PC-3 (cell line): ENCODE measurements at regions of chr13 and their contacts with region 1.

Region 1: GRCh38 chr13:79749984-79750551 is 269.1 kb downstream of the NDFIP2 start:
- DNase-seq: peak; percentile 28
- ATAC-seq: peak; percentile 64
- H3K4me3 ChIP-seq: no peak overlapping the region
- H3K27ac ChIP-seq: no peak overlapping the region
- H3K4me1 ChIP-seq: no peaks in the 10 kb centered on the region
- H3K27me3 ChIP-seq: no peaks in the 10 kb centered on the region
- CTCF ChIP-seq: no peak

Region 2: DNA sequence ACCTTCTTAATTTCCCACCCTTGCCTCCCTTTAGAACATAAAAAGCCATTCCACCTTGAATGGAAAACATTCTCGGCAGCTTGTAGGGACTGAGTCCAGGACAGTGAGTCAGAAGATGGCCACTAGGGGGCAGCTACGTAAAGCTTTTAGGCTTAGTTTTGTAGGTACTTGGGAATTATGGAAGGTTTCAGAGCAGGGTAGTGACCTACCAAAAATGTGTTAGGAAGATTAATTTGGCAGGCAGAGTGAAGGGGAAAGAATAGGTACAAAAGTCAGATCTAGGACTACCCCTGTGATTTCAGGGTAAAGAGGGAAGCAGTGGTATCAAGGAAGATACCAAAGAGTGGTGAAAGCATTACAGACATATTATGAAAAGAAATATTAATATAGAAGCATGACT is 70.7 kb before region 1 on chr13:
- CTCF ChIA-PET with region 1: no interaction called
- POLR2A ChIA-PET with region 1: no interaction called
- intact Hi-C with region 1: no loop called
- DNase-seq: peak; percentile 76
- ATAC-seq: peak; percentile 66
- H3K4me3 ChIP-seq: no peak overlapping the region
- H3K27ac ChIP-seq: no peak overlapping the region
- H3K4me1 ChIP-seq: peaks cover 11% of the 10 kb centered on the region; the same call in 1 of the 2 replicates
- H3K27me3 ChIP-seq: no peaks in the 10 kb centered on the region
- CTCF ChIP-seq: peak; percentile 86

Region 3: GRCh38 chr13:79724348-79725103 is 25.5 kb before region 1 on chr13:
- CTCF ChIA-PET with region 1: no interaction called
- POLR2A ChIA-PET with region 1: interaction called, 14 read pairs
- intact Hi-C with region 1: no loop called
- DNase-seq: peak; percentile 8
- ATAC-seq: peak; percentile 73
- H3K4me3 ChIP-seq: no peak overlapping the region
- H3K27ac ChIP-seq: no peak overlapping the region
- H3K4me1 ChIP-seq: no peaks in the 10 kb centered on the region
- H3K27me3 ChIP-seq: no peaks in the 10 kb centered on the region
- CTCF ChIP-seq: no peak